Right cardiac atrium (tissue), 5 donors: ENCODE measurements at regions of chr14 and their contacts with region 1.

Region 1: GRCh38 chr14:81453166-81453766 is 53.1 kb upstream of the STON2 start:
- DNase-seq: peak in 1 of 3 donors; percentile 69
- ATAC-seq: peak in 1 of 2 donors; percentile 29
- H3K4me3 ChIP-seq: no peak overlapping the region
- H3K27ac ChIP-seq: no peak overlapping the region
- H3K4me1 ChIP-seq: peaks cover 4% of the 10 kb centered on the region
- H3K27me3 ChIP-seq: no peaks in the 10 kb centered on the region

Region 2: DNA sequence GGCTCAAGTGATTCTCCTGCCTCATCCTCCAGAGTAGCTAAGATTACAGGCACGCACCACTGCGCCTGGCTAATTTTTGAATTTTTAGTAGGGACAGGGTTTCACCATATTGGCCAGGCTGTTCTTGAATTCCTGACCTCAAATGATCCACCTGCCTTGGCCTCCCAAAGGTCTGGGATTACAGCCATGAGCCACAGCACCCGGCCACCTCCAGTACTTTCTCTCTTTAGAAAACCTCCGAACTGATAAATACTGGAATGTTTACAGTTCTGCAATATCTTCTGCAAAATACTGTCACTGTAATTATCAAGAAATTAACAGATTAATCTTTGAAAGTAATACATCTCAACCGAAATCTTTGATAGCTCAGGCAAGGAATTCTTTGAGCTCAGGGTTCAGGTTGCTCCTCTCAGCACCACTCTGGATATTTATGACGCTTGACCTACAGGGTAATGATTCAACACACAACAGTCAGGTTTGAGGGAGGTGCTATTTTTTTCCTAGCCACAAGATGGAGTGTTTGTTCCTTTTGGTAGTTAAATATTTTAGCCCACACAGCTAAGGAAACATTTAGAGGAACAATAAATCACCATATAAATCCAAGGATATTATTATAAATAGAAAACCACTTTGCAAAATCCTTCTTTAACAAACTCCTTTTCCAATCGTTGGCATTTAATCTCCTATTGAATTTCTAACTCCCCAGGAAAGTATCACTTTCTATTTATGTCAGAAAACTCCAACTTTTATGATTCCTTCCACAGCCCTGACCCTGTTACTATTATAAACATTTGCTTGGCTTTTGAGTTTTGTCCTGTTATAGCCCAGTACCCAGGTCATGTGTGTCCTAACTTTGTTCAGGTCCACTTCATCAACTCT is 183.9 kb before region 1 on chr14:
- intact Hi-C with region 1: loop called in 2 of 4 experiments (anchors 2 to 5 kb)
- DNase-seq: no peak
- ATAC-seq: peak; percentile 68 to 70
- H3K4me3 ChIP-seq: no peak overlapping the region
- H3K27ac ChIP-seq: no peak overlapping the region
- H3K4me1 ChIP-seq: no peaks in the 10 kb centered on the region
- H3K27me3 ChIP-seq: no peaks in the 10 kb centered on the region

Region 3: DNA sequence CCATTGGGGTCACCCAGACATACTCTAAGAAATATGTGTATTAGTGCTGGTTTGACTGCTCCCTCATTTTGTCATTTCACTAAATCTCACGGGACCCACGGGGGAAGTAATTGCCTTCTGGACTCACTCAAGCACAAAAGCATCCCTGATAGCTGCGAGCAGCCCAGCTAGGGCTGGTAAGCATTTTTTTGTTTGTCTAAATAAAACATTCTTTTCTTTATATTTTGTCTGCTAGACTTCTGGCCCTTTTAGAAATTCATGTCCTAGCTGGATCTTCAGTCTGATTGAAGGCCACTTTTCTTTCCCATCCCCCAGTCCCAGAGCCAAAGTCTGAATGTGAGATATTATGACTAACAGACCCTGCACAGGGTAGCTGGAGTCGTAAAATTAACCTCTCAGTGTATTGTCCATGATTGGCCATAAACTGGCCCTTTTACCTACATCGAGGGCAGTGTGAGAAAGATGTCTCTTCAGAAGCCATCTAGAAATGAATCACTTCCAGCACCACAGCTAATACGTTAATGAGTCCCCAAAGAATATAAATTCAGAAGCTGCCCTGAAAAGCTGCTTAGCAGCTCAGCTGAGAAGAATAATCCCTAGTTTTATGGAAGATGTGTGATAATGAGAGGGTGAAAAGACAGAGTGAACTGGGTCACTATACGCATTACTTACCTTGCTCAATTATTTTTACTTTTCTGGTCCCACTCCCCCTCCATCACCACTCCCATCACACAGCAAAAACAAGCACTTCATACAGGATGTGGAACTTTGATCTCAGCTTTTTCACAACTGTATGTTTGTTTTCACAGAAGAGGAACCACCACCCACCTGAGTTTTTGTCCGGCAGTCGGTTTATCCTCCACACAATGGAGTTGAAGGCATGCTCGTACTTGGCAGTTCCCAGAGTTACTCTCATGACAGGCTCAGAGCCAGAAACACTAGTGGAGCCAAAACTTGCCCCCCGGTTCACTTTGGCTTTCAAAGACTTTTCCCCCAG is 176.9 kb before region 1 on chr14:
- intact Hi-C with region 1: loop called in 2 of 4 experiments (anchors 5 kb)
- DNase-seq: no peak
- ATAC-seq: peak in 1 of 2 donors; percentile 37
- H3K4me3 ChIP-seq: no peak overlapping the region
- H3K27ac ChIP-seq: peak overlapping the region; percentile 42
- H3K4me1 ChIP-seq: no peaks in the 10 kb centered on the region
- H3K27me3 ChIP-seq: no peaks in the 10 kb centered on the region